Activated T-helper 1 cell treated with anti-CD3 and anti-CD28 coated beads, Interleukin-12 subunit alpha, Interleukin-12 subunit beta, Interleukin-2, Interleukin-4 antibody, amounts not matched to agents 30 ng/mL and 10 ng/mL and 1 ng/mL, durations not matched to agents 14 hours and 24 hours and 36 hours (primary cell): ENCODE measurements at regions of chr1 and their contacts with region 1.

Region 1: DNA sequence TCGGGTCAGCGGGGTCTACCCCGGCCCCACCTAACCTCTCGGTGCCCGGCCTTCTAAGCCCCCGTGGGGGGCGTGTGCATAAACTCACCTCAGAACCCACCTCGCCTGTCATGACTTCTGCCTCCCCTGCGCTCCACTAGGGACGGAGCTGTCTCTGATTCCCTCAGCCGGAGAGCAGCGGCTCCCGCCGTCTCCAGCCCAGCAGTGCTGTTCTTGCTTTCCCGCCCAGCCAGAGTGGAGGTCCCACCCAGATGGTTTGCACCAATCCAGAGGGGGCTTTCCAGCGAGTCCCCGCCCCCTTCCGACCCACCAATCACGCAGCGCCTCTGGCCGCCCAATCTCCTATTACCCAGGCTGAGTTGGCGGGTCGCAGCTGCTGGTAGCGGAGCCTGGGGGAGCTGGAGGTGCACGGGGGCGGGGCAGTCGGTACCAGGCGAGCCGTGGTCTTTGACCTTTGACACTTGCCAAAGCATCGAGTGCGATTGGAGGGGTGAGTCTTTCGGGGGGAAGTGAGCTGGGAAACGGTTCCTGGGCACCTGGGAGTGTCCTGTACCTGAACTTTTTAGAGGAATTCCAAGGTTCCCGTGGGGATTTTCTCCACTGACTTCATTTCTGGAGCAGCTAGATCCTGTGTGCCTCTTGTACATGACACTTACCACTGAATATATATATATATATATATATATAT is at the start of gene CLSPN:
- DNase-seq: peak; percentile 95
- H3K4me3 Mint-ChIP-seq: peak within 1 kb of the TSS; percentile 100
- H3K27ac Mint-ChIP-seq: peak within 1 kb of the TSS; percentile 98
- H3K4me1 Mint-ChIP-seq: peaks cover 19% of the 10 kb centered on the region
- H3K27me3 Mint-ChIP-seq: no peaks in the 10 kb centered on the region
- total RNA-seq, gene CLSPN: 53.0 and 53.1 TPM in 2 replicates

Region 2: GRCh38 chr1:34852677-34853217 is 917.2 kb before region 1 on chr1:
- intact Hi-C with region 1: loop called (anchors 5 kb)
- DNase-seq: peak; percentile 87
- H3K4me3 Mint-ChIP-seq: no peak overlapping the region
- H3K27ac Mint-ChIP-seq: no peak overlapping the region
- H3K4me1 Mint-ChIP-seq: peaks cover 18% of the 10 kb centered on the region
- H3K27me3 Mint-ChIP-seq: no peaks in the 10 kb centered on the region

Region 3: GRCh38 chr1:35451125-35451528 is 318.8 kb before region 1 on chr1:
- intact Hi-C with region 1: loop called (anchors 2 kb)
- DNase-seq: peak; percentile 65
- H3K4me3 Mint-ChIP-seq: no peak overlapping the region
- H3K27ac Mint-ChIP-seq: peak overlapping the region; percentile 71
- H3K4me1 Mint-ChIP-seq: peaks cover 48% of the 10 kb centered on the region
- H3K27me3 Mint-ChIP-seq: no peaks in the 10 kb centered on the region

Region 4: GRCh38 chr1:35641233-35641866 is 128.6 kb before region 1 on chr1 and contains the start of gene PSMB2:
- intact Hi-C with region 1: loop called (anchors 1 kb)
- DNase-seq: peak; percentile 95
- H3K4me3 Mint-ChIP-seq: peak within 1 kb of the TSS; percentile 99
- H3K27ac Mint-ChIP-seq: peak within 1 kb of the TSS; percentile 99
- H3K4me1 Mint-ChIP-seq: peaks cover 40% of the 10 kb centered on the region
- H3K27me3 Mint-ChIP-seq: peaks cover 26% of the 10 kb centered on the region
- total RNA-seq, gene PSMB2: 125 and 126 TPM in 2 replicates

Region 5: GRCh38 chr1:35726450-35727433 is 43.2 kb before region 1 on chr1:
- intact Hi-C with region 1: loop called (anchors 2 kb)
- DNase-seq: peak; percentile 20
- H3K4me3 Mint-ChIP-seq: no peak overlapping the region
- H3K27ac Mint-ChIP-seq: no peak overlapping the region
- H3K4me1 Mint-ChIP-seq: peaks cover 9% of the 10 kb centered on the region
- H3K27me3 Mint-ChIP-seq: no peaks in the 10 kb centered on the region